ENCODE measurements at regions of chr5 and their contacts with region 1.

Region 1: GRCh38 chr5:38441453-38442246 is 114.8 kb downstream of the LIFR start:
- DNase-seq: peak; percentile 83 to 88 (median 86)
- ATAC-seq: peak; percentile 94 to 98 (median 97)
- H3K4me3 ChIP-seq: no peak overlapping the region
- H3K27ac ChIP-seq: no peak overlapping the region
- H3K4me1 ChIP-seq: peaks cover 0 to 13% (median 0%) of the 10 kb centered on the region in 12 donors
- H3K27me3 ChIP-seq: peaks cover 0 to 76% (median 0%) of the 10 kb centered on the region in 9 donors
- CTCF ChIP-seq: peak; percentile 93 to 98 (median 96)
- POLR2A ChIP-seq: no peak

Region 2: DNA sequence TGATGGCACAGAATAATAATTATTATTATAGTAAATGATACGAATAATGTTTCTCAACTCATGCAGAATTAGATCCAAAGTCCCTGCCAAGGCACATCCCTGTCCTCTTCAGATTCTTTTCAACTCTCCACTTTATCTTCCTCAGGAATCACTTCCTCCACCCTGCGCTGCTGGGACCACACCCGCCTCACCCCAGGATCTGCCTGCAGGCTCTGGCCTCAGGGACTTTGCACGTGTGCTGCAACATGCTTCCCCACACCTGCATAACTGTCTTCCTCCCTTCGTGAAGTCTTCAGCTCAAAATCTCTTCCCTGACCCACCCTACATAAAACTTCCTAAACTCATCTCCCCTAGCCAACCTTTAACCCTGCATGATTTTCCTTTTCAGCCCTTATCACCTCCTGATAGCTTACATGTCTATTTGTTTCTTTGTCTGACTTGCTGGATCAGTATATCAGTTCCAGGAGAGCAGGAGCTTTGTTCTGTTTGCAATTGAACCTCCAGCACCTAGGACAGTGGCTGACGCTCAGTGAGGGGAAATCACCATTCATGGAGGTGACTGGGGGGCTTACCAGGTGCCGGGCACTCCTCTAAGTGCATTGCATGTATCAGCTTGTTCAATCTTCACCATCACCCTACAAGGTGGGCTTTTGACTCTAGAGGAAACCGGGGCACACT is 230.8 kb before region 1 on chr5:
- intact Hi-C with region 1: no loop called
- DNase-seq: no peak
- ATAC-seq: no peak
- H3K4me3 ChIP-seq: no peak overlapping the region
- H3K27ac ChIP-seq: no peak overlapping the region
- H3K4me1 ChIP-seq: no peaks in the 10 kb centered on the region
- H3K27me3 ChIP-seq: peaks cover 0 to 2% (median 0%) of the 10 kb centered on the region in 9 donors
- CTCF ChIP-seq: no peak
- POLR2A ChIP-seq: no peak

Region 3: GRCh38 chr5:38479315-38479904 is 37.8 kb after region 1 on chr5:
- intact Hi-C with region 1: loop called in 1 of 10 experiments (anchors 5 kb)
- DNase-seq: no peak
- ATAC-seq: peak in 2 of 4 donors; percentile 39 to 43
- H3K4me3 ChIP-seq: no peak overlapping the region
- H3K27ac ChIP-seq: no peak overlapping the region
- H3K4me1 ChIP-seq: peaks cover 0 to 8% (median 0%) of the 10 kb centered on the region in 12 donors
- H3K27me3 ChIP-seq: peaks cover 0 to 18% (median 0%) of the 10 kb centered on the region in 9 donors
- CTCF ChIP-seq: no peak
- POLR2A ChIP-seq: no peak

Region 4: GRCh38 chr5:38551030-38552017 is 109.7 kb after region 1 on chr5:
- intact Hi-C with region 1: loop called in 7 of 10 experiments (anchors 2 to 10 kb)
- DNase-seq: no peak
- ATAC-seq: peak in 3 of 4 donors; percentile 45 to 58 (median 48)
- H3K4me3 ChIP-seq: peak overlapping the region in 2 of 12 donors; percentile 4 to 10
- H3K27ac ChIP-seq: peak overlapping the region in 2 of 12 donors; percentile 1 to 8
- H3K4me1 ChIP-seq: peaks cover 0 to 84% (median 43%) of the 10 kb centered on the region in 12 donors
- H3K27me3 ChIP-seq: peaks cover 0 to 14% (median 0%) of the 10 kb centered on the region in 9 donors
- CTCF ChIP-seq: peak; percentile 49 to 67 (median 56)
- POLR2A ChIP-seq: no peak

Region 5: DNA sequence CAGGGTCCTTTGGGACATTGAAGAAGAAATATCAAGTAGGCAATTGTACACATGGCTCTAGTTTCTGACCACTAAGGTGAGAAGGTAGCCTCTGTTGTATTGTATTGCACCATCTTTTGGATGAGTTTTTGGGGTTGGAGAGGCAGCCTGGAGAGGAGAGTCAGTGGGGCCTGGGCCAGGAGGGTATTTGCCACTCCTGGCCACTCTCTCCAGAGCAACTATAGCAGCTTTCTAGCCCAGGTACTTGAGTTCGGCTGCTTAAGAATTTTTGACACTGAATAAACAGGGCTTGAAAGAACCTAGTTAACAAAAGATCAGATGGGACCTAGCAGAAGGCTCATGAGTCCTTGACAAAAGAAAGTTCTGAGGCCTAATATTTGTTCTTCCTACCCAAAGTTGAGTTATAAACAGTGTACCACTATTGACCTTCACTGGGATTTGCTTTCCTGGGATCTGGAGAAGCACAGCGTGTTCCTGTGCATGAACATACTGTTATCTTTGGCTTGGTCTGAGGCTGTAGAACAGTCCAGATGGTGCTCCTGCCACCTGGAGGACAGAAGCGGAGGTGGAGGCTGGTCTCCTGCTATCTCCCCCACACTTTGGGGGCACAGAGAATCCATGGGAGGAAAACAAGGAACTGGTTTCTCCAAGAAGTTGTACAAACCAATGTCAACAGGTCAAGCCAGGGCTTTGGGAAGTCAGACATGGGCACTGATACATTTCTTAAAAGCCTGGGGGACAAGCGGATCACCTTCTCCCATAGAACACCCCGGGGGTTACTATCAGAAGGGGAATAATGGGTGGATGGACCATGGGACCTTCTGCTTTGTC is 225.2 kb after region 1 on chr5:
- intact Hi-C with region 1: loop called (anchors 1 to 5 kb)
- DNase-seq: peak; percentile 32 to 63 (median 51)
- ATAC-seq: peak; percentile 92 to 96 (median 94)
- H3K4me3 ChIP-seq: no peak overlapping the region
- H3K27ac ChIP-seq: peak overlapping the region in 3 of 12 donors; percentile 5 to 50 (median 50)
- H3K4me1 ChIP-seq: peaks cover 0 to 37% (median 13%) of the 10 kb centered on the region in 12 donors
- H3K27me3 ChIP-seq: no peaks in the 10 kb centered on the region
- CTCF ChIP-seq: peak; percentile 36 to 87 (median 72)
- POLR2A ChIP-seq: no peak

Region 6: DNA sequence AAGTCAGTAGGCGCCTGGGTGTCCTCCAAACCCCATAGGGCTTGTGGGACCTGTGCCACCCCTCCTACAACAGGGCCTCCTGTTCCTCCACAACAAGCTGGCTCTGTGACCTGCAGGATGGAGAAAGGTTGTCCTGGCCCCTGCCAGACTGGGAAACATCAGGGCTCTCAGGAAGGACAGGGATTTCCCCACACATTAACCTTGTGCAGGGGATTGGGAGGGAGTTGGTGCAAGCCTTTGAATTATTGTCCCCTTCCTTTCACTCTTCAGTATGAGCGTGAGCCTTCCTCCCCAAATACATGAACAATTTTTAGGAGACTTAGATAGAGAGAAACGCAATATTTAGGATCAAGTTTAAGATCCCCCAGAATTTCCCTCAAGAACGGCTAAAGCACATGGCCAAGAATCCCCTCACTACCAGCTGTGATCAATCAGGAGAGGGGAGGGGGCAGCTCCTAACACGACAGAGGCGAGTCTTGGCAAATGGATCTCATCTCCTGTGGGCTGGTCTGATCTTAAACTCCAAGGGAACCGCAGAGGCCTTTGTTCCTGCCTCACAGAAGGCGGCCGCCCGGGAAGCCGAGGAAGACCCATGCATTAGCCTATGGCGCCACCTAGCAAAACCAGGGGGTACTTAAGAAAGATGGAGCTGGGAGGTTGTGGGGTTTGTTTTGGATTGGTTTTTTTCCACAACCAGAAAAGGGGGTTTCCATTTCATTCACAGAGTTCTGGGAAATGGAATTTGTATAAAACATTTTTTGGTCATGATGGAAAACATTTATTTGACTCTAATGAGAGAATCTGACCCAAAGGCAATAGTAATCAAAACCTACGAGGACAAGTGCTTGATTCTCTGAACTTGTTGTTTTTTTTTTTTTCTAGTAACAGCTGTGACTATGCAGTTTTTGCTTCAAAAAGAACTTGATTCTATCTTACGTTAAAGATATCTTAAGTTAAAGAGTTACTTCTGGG is 368.0 kb after region 1 on chr5:
- intact Hi-C with region 1: loop called (anchors 1 to 5 kb)
- DNase-seq: peak; percentile 79 to 86 (median 85)
- ATAC-seq: peak; percentile 76 to 92 (median 90)
- H3K4me3 ChIP-seq: no peak overlapping the region
- H3K27ac ChIP-seq: peak overlapping the region in 7 of 12 donors; percentile 4 to 60 (median 40)
- H3K4me1 ChIP-seq: peaks cover 0 to 44% (median 16%) of the 10 kb centered on the region in 12 donors
- H3K27me3 ChIP-seq: peaks cover 0 to 6% (median 0%) of the 10 kb centered on the region in 9 donors
- CTCF ChIP-seq: peak; percentile 72 to 93 (median 88)
- POLR2A ChIP-seq: no peak

Region 7: GRCh38 chr5:39074016-39074886 is 632.6 kb after region 1 on chr5 and contains the start of gene RICTOR:
- intact Hi-C with region 1: loop called in 1 of 10 experiments (anchors 10 kb)
- DNase-seq: peak; percentile 92 to 96 (median 94)
- ATAC-seq: peak; percentile 90 to 97 (median 94)
- H3K4me3 ChIP-seq: peak within 1 kb of the TSS; percentile 60 to 94 (median 88)
- H3K27ac ChIP-seq: peak within 1 kb of the TSS; percentile 94 to 99 (median 98)
- H3K4me1 ChIP-seq: peaks cover 0 to 53% (median 26%) of the 10 kb centered on the region in 12 donors
- H3K27me3 ChIP-seq: no peaks in the 10 kb centered on the region
- CTCF ChIP-seq: no peak
- POLR2A ChIP-seq: peak; percentile 55 to 85
- total RNA-seq, gene RICTOR: 20.6 to 76.3 (median 34.2) TPM